ENCODE measurements at regions of chr1 and their contacts with region 1.

Region 1: GRCh38 chr1:197614916-197615692 is 160.2 kb downstream of the DENND1B start:
- DNase-seq: peak; percentile 17 to 18
- H3K4me3 ChIP-seq: no peak overlapping the region
- H3K27ac ChIP-seq: no peak overlapping the region
- H3K4me1 ChIP-seq: no peaks in the 10 kb centered on the region
- H3K27me3 ChIP-seq: no peaks in the 10 kb centered on the region
- CTCF ChIP-seq: peak in 5 of 6 experiments; percentile 20 to 63 (median 49)
- POLR2A ChIP-seq: no peak

Region 2: DNA sequence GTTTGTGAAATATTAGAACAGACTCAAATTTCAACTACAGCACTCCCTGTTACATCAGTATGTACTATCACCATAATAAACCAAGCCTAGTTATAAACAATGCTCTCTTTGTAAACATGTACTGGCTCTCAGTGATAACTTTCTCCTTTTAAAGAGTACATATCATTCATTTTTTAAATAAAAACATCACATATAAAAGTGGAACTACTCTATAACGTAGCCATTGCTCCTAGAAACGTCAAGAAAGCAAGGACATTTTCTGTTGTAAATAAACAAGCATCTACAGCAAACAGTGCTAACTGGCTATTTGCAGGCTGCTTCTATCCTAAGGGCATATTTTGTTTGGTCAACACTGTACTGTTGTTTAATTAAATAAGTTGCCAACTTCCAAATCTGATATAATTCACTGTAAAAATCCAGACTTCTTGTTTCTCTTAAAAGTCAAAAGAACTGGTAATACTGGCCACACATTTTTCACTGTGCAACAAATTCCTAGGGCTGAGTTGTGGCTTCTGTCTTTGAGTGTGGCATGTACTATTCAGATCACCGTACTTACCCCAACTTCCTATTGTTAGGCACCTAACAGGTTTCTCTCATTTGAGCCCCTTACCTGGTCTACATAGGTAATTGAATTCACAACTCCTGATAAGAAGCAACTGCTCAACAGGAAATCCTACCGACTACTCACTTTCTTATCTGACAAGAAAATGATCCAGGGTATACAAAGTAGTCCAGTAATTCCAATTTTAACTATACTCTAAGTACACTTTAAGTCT is 48.3 kb after region 1 on chr1:
- intact Hi-C with region 1: no loop called
- DNase-seq: no peak
- H3K4me3 ChIP-seq: no peak overlapping the region
- H3K27ac ChIP-seq: no peak overlapping the region
- H3K4me1 ChIP-seq: no peaks in the 10 kb centered on the region
- H3K27me3 ChIP-seq: no peaks in the 10 kb centered on the region
- CTCF ChIP-seq: no peak
- POLR2A ChIP-seq: no peak

Region 3: DNA sequence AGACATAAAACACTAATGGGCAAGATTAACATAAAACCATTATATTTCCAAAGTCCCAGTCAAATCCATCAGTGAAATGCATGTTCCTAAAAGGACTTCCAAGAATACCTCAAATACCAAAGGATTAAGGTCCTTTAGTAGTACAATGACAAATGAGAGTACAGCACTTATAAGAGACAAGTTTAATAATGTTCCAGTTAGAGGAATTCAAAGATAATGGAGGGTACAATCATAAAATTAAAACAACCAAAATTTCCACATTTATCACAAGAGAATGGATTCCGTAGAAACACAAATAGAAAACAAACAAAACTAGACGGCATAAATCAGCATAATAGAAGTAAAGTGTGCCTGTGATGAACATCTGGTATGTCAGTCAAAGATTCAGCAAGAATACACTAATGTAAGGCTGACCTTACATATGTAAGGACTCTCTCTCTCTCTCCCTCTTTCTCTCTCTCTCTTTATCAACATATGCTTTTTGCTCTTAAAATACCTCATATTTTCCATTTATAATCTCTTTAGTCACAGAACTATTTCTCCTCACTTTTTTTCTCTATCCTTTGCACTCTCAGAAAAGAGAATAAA is 254.5 kb after region 1 on chr1:
- intact Hi-C with region 1: loop called (anchors 10 kb)
- DNase-seq: no peak
- H3K4me3 ChIP-seq: no peak overlapping the region
- H3K27ac ChIP-seq: no peak overlapping the region
- H3K4me1 ChIP-seq: no peaks in the 10 kb centered on the region
- H3K27me3 ChIP-seq: no peaks in the 10 kb centered on the region
- CTCF ChIP-seq: no peak
- POLR2A ChIP-seq: no peak